PC-9 (cell line): ENCODE measurements at regions of chr12 and their contacts with region 1.

Region 1: DNA sequence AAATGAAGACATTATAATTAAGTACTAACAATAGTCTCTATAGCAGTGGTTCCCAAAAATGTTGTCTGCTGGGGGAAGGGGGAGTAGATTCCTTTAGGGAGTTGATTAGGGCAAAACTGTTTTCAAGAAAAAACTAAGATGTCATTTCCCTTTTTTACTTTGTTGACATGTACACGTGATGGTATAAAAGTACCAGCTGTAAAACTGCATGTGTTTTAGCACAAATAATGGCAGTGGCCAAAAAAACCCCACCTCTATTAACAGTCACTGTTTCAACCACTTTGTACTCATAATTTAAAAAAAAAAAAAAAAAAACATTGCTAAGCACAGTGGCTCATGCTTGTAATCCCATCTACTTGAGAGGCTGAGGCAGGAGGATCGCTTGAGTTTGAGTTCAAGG is 61.7 kb downstream of the PPP1R12A start:
- DNase-seq: no peak
- H3K4me3 ChIP-seq: no peak overlapping the region
- H3K27ac ChIP-seq: no peak overlapping the region
- H3K4me1 ChIP-seq: no peaks in the 10 kb centered on the region
- H3K27me3 ChIP-seq: no peaks in the 10 kb centered on the region
- CTCF ChIP-seq: no peak

Region 2: DNA sequence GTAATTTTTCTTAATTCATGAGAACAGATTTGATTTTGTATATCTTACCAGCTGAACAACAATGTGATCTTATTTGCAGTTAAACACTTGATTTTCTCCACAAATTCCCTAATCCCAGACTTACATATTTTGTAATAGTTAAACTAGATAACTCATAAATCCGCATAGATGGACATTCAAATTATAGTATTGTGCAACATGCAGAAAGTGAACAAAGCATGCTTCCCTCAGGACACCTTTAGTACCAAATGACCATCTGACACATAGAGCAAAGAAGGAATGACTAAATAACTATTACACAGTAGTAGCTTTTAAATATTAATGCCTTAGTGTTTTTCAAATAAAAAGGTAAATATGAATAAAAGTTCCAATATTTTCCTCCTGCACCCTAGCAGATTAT is 271.3 kb before region 1 on chr12:
- CTCF ChIA-PET with region 1: no interaction called
- POLR2A ChIA-PET with region 1: no interaction called
- intact Hi-C with region 1: no loop called
- DNase-seq: no peak
- H3K4me3 ChIP-seq: no peak overlapping the region
- H3K27ac ChIP-seq: no peak overlapping the region
- H3K4me1 ChIP-seq: no peaks in the 10 kb centered on the region
- H3K27me3 ChIP-seq: no peaks in the 10 kb centered on the region
- CTCF ChIP-seq: no peak

Region 3: GRCh38 chr12:79811351-79811750 is 61.9 kb before region 1 on chr12:
- CTCF ChIA-PET with region 1: no interaction called
- POLR2A ChIA-PET with region 1: no interaction called
- intact Hi-C with region 1: loop called (anchors 10 kb)
- DNase-seq: no peak
- H3K4me3 ChIP-seq: no peak overlapping the region
- H3K27ac ChIP-seq: no peak overlapping the region
- H3K4me1 ChIP-seq: no peaks in the 10 kb centered on the region
- H3K27me3 ChIP-seq: no peaks in the 10 kb centered on the region
- CTCF ChIP-seq: no peak

Region 4: GRCh38 chr12:79945433-79945832 is 72.2 kb after region 1 on chr12:
- CTCF ChIA-PET with region 1: no interaction called
- POLR2A ChIA-PET with region 1: no interaction called
- intact Hi-C with region 1: no loop called
- DNase-seq: no peak
- H3K4me3 ChIP-seq: no peak overlapping the region
- H3K27ac ChIP-seq: no peak overlapping the region
- H3K4me1 ChIP-seq: no peaks in the 10 kb centered on the region
- H3K27me3 ChIP-seq: no peaks in the 10 kb centered on the region
- CTCF ChIP-seq: no peak